Lower leg skin (tissue), 4 donors: ENCODE measurements at regions of chr14 and their contacts with region 1.

Region 1: DNA sequence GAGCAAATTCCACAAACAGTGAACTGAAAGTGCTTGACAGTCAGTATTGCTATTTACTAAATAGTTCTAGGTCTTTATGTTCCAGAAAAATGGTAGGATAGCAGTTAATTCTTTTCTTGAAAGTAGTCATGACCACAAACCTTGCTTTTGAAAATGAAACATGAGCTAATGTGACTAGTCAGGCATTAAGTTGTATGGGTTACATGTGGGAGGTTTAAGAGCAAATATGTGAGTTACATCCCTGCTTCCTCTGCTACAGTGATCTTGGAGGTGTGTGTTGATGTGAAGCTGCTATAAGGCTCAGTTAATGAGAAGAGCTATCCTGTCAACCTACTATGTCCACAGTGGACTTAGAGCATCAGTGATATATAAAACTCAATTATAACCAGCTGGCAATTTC is 741.6 kb downstream of the FSCB start:
- DNase-seq: no peak
- H3K4me3 ChIP-seq: no peak overlapping the region
- CTCF ChIP-seq: no peak
- POLR2A ChIP-seq: no peak

Region 2: GRCh38 chr14:44211718-44212117 is 446.2 kb after region 1 on chr14:
- intact Hi-C with region 1: loop called (anchors 5 kb)
- DNase-seq: no peak
- H3K4me3 ChIP-seq: no peak overlapping the region
- CTCF ChIP-seq: no peak
- POLR2A ChIP-seq: no peak